Naive thymus-derived CD4-positive, alpha-beta T cell (primary cell): ENCODE measurements at regions of chr14 and their contacts with region 1.

Region 1: DNA sequence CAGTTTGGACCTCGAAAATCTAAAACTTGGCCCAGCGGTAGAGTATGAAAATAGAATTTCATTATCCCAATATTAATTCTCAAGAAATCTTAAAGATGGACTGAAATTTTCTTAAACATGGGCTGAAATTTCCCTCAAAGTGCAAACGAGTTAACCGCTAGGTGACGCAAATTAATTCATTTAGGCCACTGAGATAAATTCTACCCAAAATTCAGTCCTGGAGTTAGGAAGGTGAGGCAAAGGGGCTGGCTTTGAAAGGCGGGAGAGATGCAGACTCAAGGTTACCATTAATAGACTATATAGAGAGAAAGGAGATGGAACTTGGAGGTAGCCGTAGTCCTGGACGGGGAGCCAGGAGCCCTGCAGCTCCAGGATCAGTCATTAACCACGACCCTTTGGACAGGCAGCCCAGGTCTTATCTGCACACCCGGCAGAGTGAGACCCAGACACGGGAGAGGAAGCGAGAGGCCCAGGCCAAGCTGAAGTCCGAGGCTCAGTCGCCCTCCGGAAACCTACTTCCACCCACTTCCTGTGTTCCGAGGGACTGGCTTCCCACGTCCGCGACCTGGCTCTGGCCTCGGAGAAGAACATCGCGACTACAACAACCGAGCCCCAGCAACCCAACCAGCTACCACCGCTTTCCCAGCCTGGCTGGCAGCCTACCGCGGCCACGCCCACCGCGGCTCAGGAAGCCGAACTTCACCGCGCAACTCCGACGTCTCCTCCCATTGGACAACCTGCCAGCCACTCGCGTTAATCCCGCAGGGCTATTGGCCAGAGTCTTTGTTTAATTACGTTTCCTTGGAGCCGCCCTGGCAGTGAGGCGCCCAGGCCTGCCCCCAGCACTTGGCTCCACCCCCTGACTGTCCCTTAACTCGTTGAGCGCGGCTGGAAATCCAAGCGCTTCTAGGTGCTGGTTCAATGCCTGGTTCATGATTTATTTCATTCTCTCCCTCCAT is at the start of gene EFCAB11:
- DNase-seq: peak; percentile 80 to 98 (median 97)
- ATAC-seq: peak; percentile 90
- H3K4me3 ChIP-seq: peak within 1 kb of the TSS; percentile 72
- H3K4me3 Mint-ChIP-seq: peak within 1 kb of the TSS; percentile 74 to 98 (median 94)
- H3K27ac ChIP-seq: peak within 1 kb of the TSS; percentile 94
- H3K27ac Mint-ChIP-seq: peak within 1 kb of the TSS; percentile 82 to 98 (median 91)
- H3K4me1 ChIP-seq: peaks cover 16 to 21% of the 10 kb centered on the region in 2 donors
- H3K4me1 Mint-ChIP-seq: peaks cover 21 to 54% (median 43%) of the 10 kb centered on the region in 7 donors
- H3K27me3 ChIP-seq: no peaks in the 10 kb centered on the region
- H3K27me3 Mint-ChIP-seq: no peaks in the 10 kb centered on the region
- total RNA-seq, gene EFCAB11: 1.2 to 8.5 (median 1.9) TPM

Region 2: GRCh38 chr14:88562831-88563686 is 1391.3 kb before region 1 on chr14 and contains the start of gene ZC3H14:
- CTCF ChIA-PET with region 1: no interaction called
- POLR2A ChIA-PET with region 1: no interaction called
- intact Hi-C with region 1: loop called (anchors 2 kb)
- DNase-seq: peak; percentile 80 to 91 (median 88)
- ATAC-seq: peak; percentile 98
- H3K4me3 ChIP-seq: peak within 1 kb of the TSS; percentile 84
- H3K4me3 Mint-ChIP-seq: peak within 1 kb of the TSS; percentile 89 to 96 (median 92)
- H3K27ac ChIP-seq: peak within 1 kb of the TSS; percentile 72
- H3K27ac Mint-ChIP-seq: peak within 1 kb of the TSS; percentile 49 to 94 (median 84)
- H3K4me1 ChIP-seq: peaks cover 12 to 13% of the 10 kb centered on the region in 2 donors
- H3K4me1 Mint-ChIP-seq: peaks cover 19 to 44% (median 38%) of the 10 kb centered on the region in 7 donors
- H3K27me3 ChIP-seq: no peaks in the 10 kb centered on the region
- H3K27me3 Mint-ChIP-seq: peaks cover 0 to 27% (median 0%) of the 10 kb centered on the region in 5 donors
- total RNA-seq, gene ZC3H14: 40.1 to 66.2 (median 45.6) TPM

Region 3: GRCh38 chr14:89720741-89721315 is 233.5 kb before region 1 on chr14:
- CTCF ChIA-PET with region 1: no interaction called
- POLR2A ChIA-PET with region 1: no interaction called
- intact Hi-C with region 1: loop called (anchors 2 to 5 kb)
- DNase-seq: peak; percentile 43 to 91 (median 88)
- ATAC-seq: peak; percentile 96
- H3K4me3 ChIP-seq: peak overlapping the region; percentile 43
- H3K4me3 Mint-ChIP-seq: peak overlapping the region; percentile 65 to 81 (median 73)
- H3K27ac ChIP-seq: peak overlapping the region; percentile 70
- H3K27ac Mint-ChIP-seq: peak overlapping the region; percentile 94 to 99 (median 98)
- H3K4me1 ChIP-seq: peaks cover 76 to 78% of the 10 kb centered on the region in 2 donors
- H3K4me1 Mint-ChIP-seq: peaks cover 68 to 99% (median 92%) of the 10 kb centered on the region in 7 donors
- H3K27me3 ChIP-seq: no peaks in the 10 kb centered on the region
- H3K27me3 Mint-ChIP-seq: no peaks in the 10 kb centered on the region

Region 4: GRCh38 chr14:90060312-90060964 is 106.1 kb after region 1 on chr14:
- CTCF ChIA-PET with region 1: no interaction called
- POLR2A ChIA-PET with region 1: no interaction called
- intact Hi-C with region 1: loop called in 1 of 2 experiments (anchors 2 kb)
- DNase-seq: peak in 8 of 9 donors; percentile 9 to 73 (median 24)
- ATAC-seq: peak; percentile 70
- H3K4me3 ChIP-seq: peak overlapping the region; percentile 41
- H3K4me3 Mint-ChIP-seq: peak overlapping the region; percentile 46 to 88 (median 78)
- H3K27ac ChIP-seq: no peak overlapping the region
- H3K27ac Mint-ChIP-seq: no peak overlapping the region
- H3K4me1 ChIP-seq: peaks cover 0 to 12% of the 10 kb centered on the region in 2 donors
- H3K4me1 Mint-ChIP-seq: peaks cover 16 to 30% (median 23%) of the 10 kb centered on the region in 7 donors
- H3K27me3 ChIP-seq: peaks cover 0 to 11% of the 10 kb centered on the region in 2 donors
- H3K27me3 Mint-ChIP-seq: peaks cover 63 to 76% (median 72%) of the 10 kb centered on the region in 5 donors

Region 5: GRCh38 chr14:90399541-90400444 is 445.4 kb after region 1 on chr14:
- CTCF ChIA-PET with region 1: no interaction called
- POLR2A ChIA-PET with region 1: interaction called, 3 read pairs
- intact Hi-C with region 1: loop called (anchors 1 to 2 kb)
- DNase-seq: peak; percentile 60 to 89 (median 85)
- ATAC-seq: peak; percentile 69
- H3K4me3 ChIP-seq: peak overlapping the region; percentile 78
- H3K4me3 Mint-ChIP-seq: peak overlapping the region; percentile 91 to 100 (median 98)
- H3K27ac ChIP-seq: peak overlapping the region; percentile 92
- H3K27ac Mint-ChIP-seq: peak overlapping the region; percentile 38 to 100 (median 99)
- H3K4me1 ChIP-seq: peaks cover 49 to 50% of the 10 kb centered on the region in 2 donors
- H3K4me1 Mint-ChIP-seq: peaks cover 45 to 70% (median 62%) of the 10 kb centered on the region in 7 donors
- H3K27me3 ChIP-seq: no peaks in the 10 kb centered on the region
- H3K27me3 Mint-ChIP-seq: peaks cover 0 to 7% (median 0%) of the 10 kb centered on the region in 5 donors